Endothelial cell of umbilical vein (primary cell): ENCODE measurements at regions of chr6 and their contacts with region 1.

Region 1: GRCh38 chr6:9540534-9541126 is 874.2 kb downstream of the TFAP2A start:
- DNase-seq: peak; percentile 58
- H3K4me3 ChIP-seq: no peak overlapping the region
- H3K27ac ChIP-seq: peak overlapping the region; percentile 48
- H3K4me1 ChIP-seq: peaks cover 23% of the 10 kb centered on the region
- H3K27me3 ChIP-seq: no peaks in the 10 kb centered on the region
- CTCF ChIP-seq: peak; percentile 38
- POLR2A ChIP-seq: no peak

Region 2: GRCh38 chr6:9250852-9251251 is 289.8 kb before region 1 on chr6:
- CTCF ChIA-PET with region 1: interaction called, 3 read pairs
- POLR2A ChIA-PET with region 1: no interaction called
- dilution Hi-C with region 1: no loop called
- intact Hi-C with region 1: loop called (anchors 1 kb)
- DNase-seq: peak; percentile 52
- H3K4me3 ChIP-seq: no peak overlapping the region
- H3K27ac ChIP-seq: no peak overlapping the region
- H3K4me1 ChIP-seq: no peaks in the 10 kb centered on the region
- H3K27me3 ChIP-seq: no peaks in the 10 kb centered on the region
- CTCF ChIP-seq: peak; percentile 32 to 41
- POLR2A ChIP-seq: no peak

Region 3: GRCh38 chr6:9380568-9380967 is 160.1 kb before region 1 on chr6:
- CTCF ChIA-PET with region 1: no interaction called
- POLR2A ChIA-PET with region 1: no interaction called
- dilution Hi-C with region 1: no loop called
- intact Hi-C with region 1: no loop called
- DNase-seq: no peak
- H3K4me3 ChIP-seq: no peak overlapping the region
- H3K27ac ChIP-seq: no peak overlapping the region
- H3K4me1 ChIP-seq: no peaks in the 10 kb centered on the region
- H3K27me3 ChIP-seq: no peaks in the 10 kb centered on the region
- CTCF ChIP-seq: no peak
- POLR2A ChIP-seq: no peak

Region 4: DNA sequence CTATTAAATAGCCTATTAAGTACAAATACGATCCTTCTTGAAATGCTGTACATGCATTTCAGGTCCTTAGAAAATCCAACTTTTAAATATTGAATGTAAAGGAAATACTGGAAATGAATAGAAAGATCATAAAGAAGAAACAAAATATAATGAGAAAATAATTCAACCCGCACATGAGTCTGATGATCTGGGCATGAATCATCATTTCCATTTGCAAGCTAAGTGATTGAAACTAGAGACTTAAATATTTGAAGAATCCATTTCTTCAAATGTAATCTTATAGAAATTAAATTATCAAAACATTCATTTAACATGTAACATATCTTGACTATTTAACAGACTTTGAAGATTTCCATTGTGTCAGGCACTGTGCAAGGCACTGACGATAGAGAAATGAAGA is 102.8 kb before region 1 on chr6:
- CTCF ChIA-PET with region 1: no interaction called
- POLR2A ChIA-PET with region 1: no interaction called
- dilution Hi-C with region 1: no loop called
- intact Hi-C with region 1: no loop called
- DNase-seq: no peak
- H3K4me3 ChIP-seq: no peak overlapping the region
- H3K27ac ChIP-seq: no peak overlapping the region
- H3K4me1 ChIP-seq: no peaks in the 10 kb centered on the region
- H3K27me3 ChIP-seq: no peaks in the 10 kb centered on the region
- CTCF ChIP-seq: no peak
- POLR2A ChIP-seq: no peak

Region 5: DNA sequence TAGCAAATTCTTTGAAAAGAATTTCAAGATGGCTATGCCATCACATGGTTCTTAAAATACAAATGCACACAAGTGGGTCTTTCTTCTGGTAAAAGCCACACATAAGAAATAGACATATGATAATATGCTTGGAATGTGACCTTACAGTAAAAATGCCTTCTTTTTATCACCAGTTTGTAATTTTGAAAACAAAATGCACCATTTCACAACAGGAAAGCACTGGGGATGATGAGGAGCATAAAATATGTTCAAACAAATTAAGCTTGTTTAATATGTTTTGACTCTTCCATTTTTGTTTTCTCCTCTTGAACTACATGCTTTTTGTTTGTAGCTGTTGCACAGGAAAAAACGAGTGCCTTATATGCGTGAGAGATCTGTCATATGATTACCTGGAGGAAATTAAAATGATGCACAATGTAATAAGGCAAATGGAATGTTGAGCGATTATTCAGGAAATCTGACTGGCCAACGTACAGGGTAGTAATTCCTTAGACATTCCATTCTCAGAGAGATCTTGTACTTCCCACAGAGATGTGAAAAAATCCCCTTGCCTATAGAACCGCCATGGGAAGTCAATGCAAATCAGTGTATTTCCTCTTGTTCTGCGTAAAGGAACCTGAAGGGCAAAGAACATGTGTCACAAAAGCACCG is 37.4 kb before region 1 on chr6:
- CTCF ChIA-PET with region 1: no interaction called
- POLR2A ChIA-PET with region 1: no interaction called
- dilution Hi-C with region 1: no loop called
- intact Hi-C with region 1: loop called (anchors 1 kb)
- DNase-seq: peak; percentile 93
- H3K4me3 ChIP-seq: no peak overlapping the region
- H3K27ac ChIP-seq: peak overlapping the region; percentile 98
- H3K4me1 ChIP-seq: peaks cover 17% of the 10 kb centered on the region
- H3K27me3 ChIP-seq: no peaks in the 10 kb centered on the region
- CTCF ChIP-seq: no peak
- POLR2A ChIP-seq: no peak

Region 6: DNA sequence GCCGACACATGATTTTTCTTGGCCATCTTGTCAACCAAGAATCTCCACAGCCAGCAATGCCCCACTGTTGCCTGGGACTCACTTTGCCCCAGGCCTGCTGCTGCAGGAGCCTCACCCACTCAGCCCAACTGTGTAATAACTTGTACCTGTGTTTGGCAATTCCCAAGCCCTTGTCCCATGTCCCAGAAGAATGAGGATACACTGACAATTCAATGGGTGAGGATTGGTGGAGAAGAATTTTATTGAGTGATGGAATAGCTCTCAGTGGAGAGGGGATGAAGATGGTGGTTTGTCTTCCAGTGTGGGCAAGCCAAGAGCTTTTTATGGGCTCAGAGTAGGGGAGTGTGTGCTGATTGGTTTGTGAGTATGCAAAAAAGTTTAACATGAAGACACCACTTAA is 12.4 kb after region 1 on chr6:
- CTCF ChIA-PET with region 1: no interaction called
- POLR2A ChIA-PET with region 1: no interaction called
- dilution Hi-C with region 1: no loop called
- intact Hi-C with region 1: no loop called
- DNase-seq: no peak
- H3K4me3 ChIP-seq: no peak overlapping the region
- H3K27ac ChIP-seq: no peak overlapping the region
- H3K4me1 ChIP-seq: no peaks in the 10 kb centered on the region
- H3K27me3 ChIP-seq: no peaks in the 10 kb centered on the region
- CTCF ChIP-seq: no peak
- POLR2A ChIP-seq: no peak

Region 7: DNA sequence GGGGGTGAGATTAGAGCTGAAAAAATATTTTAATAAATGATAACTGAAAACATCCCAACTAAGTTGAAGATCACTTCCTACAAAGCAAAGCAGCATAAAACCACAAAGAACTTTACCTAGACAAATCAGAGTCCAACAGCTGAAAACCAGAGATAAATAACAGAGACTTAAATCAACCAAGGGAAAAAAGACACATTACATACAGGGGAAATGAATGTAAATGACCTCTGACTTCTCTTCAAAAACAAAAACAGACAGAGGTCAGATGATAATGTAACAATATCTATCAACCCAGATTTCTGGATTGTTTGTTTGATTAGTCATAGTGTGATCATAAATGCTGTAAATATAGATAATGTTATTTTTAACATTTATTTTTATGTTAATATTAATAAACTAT is 91.4 kb after region 1 on chr6:
- CTCF ChIA-PET with region 1: no interaction called
- POLR2A ChIA-PET with region 1: no interaction called
- dilution Hi-C with region 1: no loop called
- intact Hi-C with region 1: loop called (anchors 1 kb)
- DNase-seq: peak; percentile 63
- H3K4me3 ChIP-seq: no peak overlapping the region
- H3K27ac ChIP-seq: no peak overlapping the region
- H3K4me1 ChIP-seq: peaks cover 9% of the 10 kb centered on the region
- H3K27me3 ChIP-seq: no peaks in the 10 kb centered on the region
- CTCF ChIP-seq: no peak
- POLR2A ChIP-seq: peak; percentile 26

Region 8: GRCh38 chr6:9834233-9834632 is 293.6 kb after region 1 on chr6:
- CTCF ChIA-PET with region 1: no interaction called
- POLR2A ChIA-PET with region 1: no interaction called
- dilution Hi-C with region 1: no loop called
- intact Hi-C with region 1: loop called (anchors 1 kb)
- DNase-seq: peak; percentile 90
- H3K4me3 ChIP-seq: no peak overlapping the region
- H3K27ac ChIP-seq: peak overlapping the region; percentile 61
- H3K4me1 ChIP-seq: peaks cover 8% of the 10 kb centered on the region
- H3K27me3 ChIP-seq: no peaks in the 10 kb centered on the region
- CTCF ChIP-seq: no peak
- POLR2A ChIP-seq: no peak